Caco-2 (cell line): ENCODE measurements at regions of chr13 and their contacts with region 1.

Region 1: GRCh38 chr13:73058736-73059459 is at the start of gene KLF5:
- DNase-seq: peak; percentile 99 to 100
- H3K4me3 ChIP-seq: peak within 1 kb of the TSS; percentile 99
- H3K4me3 Mint-ChIP-seq: peak within 1 kb of the TSS; percentile 76
- H3K27ac Mint-ChIP-seq: peak within 1 kb of the TSS; percentile 80
- H3K4me1 ChIP-seq: peaks cover 61% of the 10 kb centered on the region
- H3K4me1 Mint-ChIP-seq: peaks cover 35% of the 10 kb centered on the region
- H3K27me3 ChIP-seq: no peaks in the 10 kb centered on the region
- H3K27me3 Mint-ChIP-seq: no peaks in the 10 kb centered on the region
- CTCF ChIP-seq: no peak
- total RNA-seq, gene KLF5: 80.1 and 103 TPM in 2 replicates

Region 2: DNA sequence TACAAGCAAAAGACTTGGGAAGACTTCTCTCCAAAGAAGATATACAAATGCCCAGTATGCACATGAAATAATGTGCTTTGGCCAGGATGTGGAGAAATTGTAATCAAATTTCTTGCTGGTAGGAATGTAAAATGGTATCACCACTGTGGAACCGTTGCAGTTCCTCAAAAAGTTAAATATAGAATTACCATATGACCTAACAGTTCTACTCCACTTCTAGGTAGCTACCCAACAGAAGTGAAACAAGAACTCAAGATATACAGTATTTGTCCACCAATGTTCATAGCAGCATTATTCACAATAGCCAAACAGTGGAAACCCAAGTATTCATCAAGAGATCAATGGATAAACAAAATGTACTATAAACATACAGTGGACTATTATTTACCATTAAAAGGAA is 95.1 kb before region 1 on chr13:
- CTCF ChIA-PET with region 1: no interaction called
- POLR2A ChIA-PET with region 1: no interaction called
- intact Hi-C with region 1: loop called (anchors 2 kb)
- DNase-seq: no peak
- H3K4me3 ChIP-seq: no peak overlapping the region
- H3K4me3 Mint-ChIP-seq: no peak overlapping the region
- H3K27ac Mint-ChIP-seq: no peak overlapping the region
- H3K4me1 ChIP-seq: peaks cover 25% of the 10 kb centered on the region
- H3K4me1 Mint-ChIP-seq: peaks cover 13% of the 10 kb centered on the region
- H3K27me3 ChIP-seq: no peaks in the 10 kb centered on the region
- H3K27me3 Mint-ChIP-seq: no peaks in the 10 kb centered on the region
- CTCF ChIP-seq: no peak

Region 3: GRCh38 chr13:73000027-73000674 is 58.7 kb before region 1 on chr13:
- CTCF ChIA-PET with region 1: interaction called, 3 read pairs
- POLR2A ChIA-PET with region 1: interaction called, 3 read pairs
- intact Hi-C with region 1: loop called (anchors 5 kb)
- DNase-seq: no peak
- H3K4me3 ChIP-seq: no peak overlapping the region
- H3K4me3 Mint-ChIP-seq: no peak overlapping the region
- H3K27ac Mint-ChIP-seq: peak overlapping the region; percentile 8
- H3K4me1 ChIP-seq: peaks cover 30% of the 10 kb centered on the region
- H3K4me1 Mint-ChIP-seq: peaks cover 23% of the 10 kb centered on the region
- H3K27me3 ChIP-seq: no peaks in the 10 kb centered on the region
- H3K27me3 Mint-ChIP-seq: no peaks in the 10 kb centered on the region
- CTCF ChIP-seq: no peak

Region 4: GRCh38 chr13:73138643-73139491 is 80.0 kb after region 1 on chr13:
- CTCF ChIA-PET with region 1: no interaction called
- POLR2A ChIA-PET with region 1: no interaction called
- intact Hi-C with region 1: loop called (anchors 1 kb)
- DNase-seq: peak; percentile 81 to 89
- H3K4me3 ChIP-seq: no peak overlapping the region
- H3K4me3 Mint-ChIP-seq: peak overlapping the region; percentile 61
- H3K27ac Mint-ChIP-seq: peak overlapping the region; percentile 89
- H3K4me1 ChIP-seq: peaks cover 44% of the 10 kb centered on the region
- H3K4me1 Mint-ChIP-seq: peaks cover 51% of the 10 kb centered on the region
- H3K27me3 ChIP-seq: no peaks in the 10 kb centered on the region
- H3K27me3 Mint-ChIP-seq: no peaks in the 10 kb centered on the region
- CTCF ChIP-seq: no peak

Region 5: GRCh38 chr13:73200406-73200805 is 141.5 kb after region 1 on chr13:
- CTCF ChIA-PET with region 1: no interaction called
- POLR2A ChIA-PET with region 1: no interaction called
- intact Hi-C with region 1: no loop called
- DNase-seq: no peak
- H3K4me3 ChIP-seq: no peak overlapping the region
- H3K4me3 Mint-ChIP-seq: no peak overlapping the region
- H3K27ac Mint-ChIP-seq: no peak overlapping the region
- H3K4me1 ChIP-seq: peaks cover 13% of the 10 kb centered on the region
- H3K4me1 Mint-ChIP-seq: peaks cover 7% of the 10 kb centered on the region
- H3K27me3 ChIP-seq: no peaks in the 10 kb centered on the region
- H3K27me3 Mint-ChIP-seq: no peaks in the 10 kb centered on the region
- CTCF ChIP-seq: no peak

Region 6: DNA sequence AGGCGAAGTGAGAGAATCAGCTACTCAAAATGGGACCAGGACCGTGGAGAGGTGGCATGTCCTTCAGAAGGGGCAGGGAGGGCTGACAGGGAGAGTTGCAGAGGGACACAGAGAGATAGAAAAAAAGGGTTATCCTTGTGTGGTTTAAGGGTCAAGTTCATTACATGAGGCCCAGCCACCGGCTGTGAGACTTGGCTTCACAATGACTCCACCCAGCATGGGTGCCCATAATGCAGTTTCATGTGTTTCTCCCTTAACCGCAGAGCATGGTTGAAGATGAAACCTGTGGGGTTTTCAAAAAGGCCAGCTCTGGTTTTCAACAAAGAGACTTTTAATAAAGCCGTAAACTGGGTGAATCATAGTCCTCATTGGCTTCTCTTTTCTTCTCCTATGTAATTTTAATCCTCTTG is 164.5 kb after region 1 on chr13:
- CTCF ChIA-PET with region 1: interaction called, 3 read pairs
- POLR2A ChIA-PET with region 1: no interaction called
- intact Hi-C with region 1: loop called (anchors 5 kb)
- DNase-seq: peak in 1 of 2 experiments; percentile 12
- H3K4me3 ChIP-seq: no peak overlapping the region
- H3K4me3 Mint-ChIP-seq: no peak overlapping the region
- H3K27ac Mint-ChIP-seq: peak overlapping the region; percentile 62
- H3K4me1 ChIP-seq: peaks cover 34% of the 10 kb centered on the region
- H3K4me1 Mint-ChIP-seq: peaks cover 44% of the 10 kb centered on the region
- H3K27me3 ChIP-seq: no peaks in the 10 kb centered on the region
- H3K27me3 Mint-ChIP-seq: no peaks in the 10 kb centered on the region
- CTCF ChIP-seq: no peak

Region 7: GRCh38 chr13:73417015-73417623 is 358.2 kb after region 1 on chr13:
- CTCF ChIA-PET with region 1: no interaction called
- POLR2A ChIA-PET with region 1: interaction called, 3 read pairs
- intact Hi-C with region 1: loop called (anchors 1 kb)
- DNase-seq: peak in 1 of 2 experiments; percentile 55
- H3K4me3 ChIP-seq: no peak overlapping the region
- H3K4me3 Mint-ChIP-seq: no peak overlapping the region
- H3K27ac Mint-ChIP-seq: no peak overlapping the region
- H3K4me1 ChIP-seq: peaks cover 19% of the 10 kb centered on the region
- H3K4me1 Mint-ChIP-seq: peaks cover 15% of the 10 kb centered on the region
- H3K27me3 ChIP-seq: no peaks in the 10 kb centered on the region
- H3K27me3 Mint-ChIP-seq: no peaks in the 10 kb centered on the region
- CTCF ChIP-seq: peak; percentile 38 to 45